ENCODE measurements at regions of chr19 and their contacts with region 1.

Region 1: GRCh38 chr19:55339048-55339888 is at the start of gene KMT5C:
- DNase-seq: peak; percentile 100
- H3K4me3 ChIP-seq: peak within 1 kb of the TSS; percentile 75 to 77
- H3K27ac ChIP-seq: peak within 1 kb of the TSS; percentile 89
- H3K4me1 ChIP-seq: peaks cover 0 to 23% (median 21%) of the 10 kb centered on the region in 4 donors
- H3K27me3 ChIP-seq: peaks cover 0 to 14% of the 10 kb centered on the region in 2 donors
- CTCF ChIP-seq: peak; percentile 49 to 59

Region 2: GRCh38 chr19:55146078-55146704 is 193.1 kb before region 1 on chr19:
- intact Hi-C with region 1: no loop called
- DNase-seq: no peak
- H3K4me3 ChIP-seq: no peak overlapping the region
- H3K27ac ChIP-seq: no peak overlapping the region
- H3K4me1 ChIP-seq: peaks cover 0 to 18% (median 4%) of the 10 kb centered on the region in 4 donors
- H3K27me3 ChIP-seq: peaks cover 7 to 95% of the 10 kb centered on the region in 2 donors
- CTCF ChIP-seq: no peak

Region 3: DNA sequence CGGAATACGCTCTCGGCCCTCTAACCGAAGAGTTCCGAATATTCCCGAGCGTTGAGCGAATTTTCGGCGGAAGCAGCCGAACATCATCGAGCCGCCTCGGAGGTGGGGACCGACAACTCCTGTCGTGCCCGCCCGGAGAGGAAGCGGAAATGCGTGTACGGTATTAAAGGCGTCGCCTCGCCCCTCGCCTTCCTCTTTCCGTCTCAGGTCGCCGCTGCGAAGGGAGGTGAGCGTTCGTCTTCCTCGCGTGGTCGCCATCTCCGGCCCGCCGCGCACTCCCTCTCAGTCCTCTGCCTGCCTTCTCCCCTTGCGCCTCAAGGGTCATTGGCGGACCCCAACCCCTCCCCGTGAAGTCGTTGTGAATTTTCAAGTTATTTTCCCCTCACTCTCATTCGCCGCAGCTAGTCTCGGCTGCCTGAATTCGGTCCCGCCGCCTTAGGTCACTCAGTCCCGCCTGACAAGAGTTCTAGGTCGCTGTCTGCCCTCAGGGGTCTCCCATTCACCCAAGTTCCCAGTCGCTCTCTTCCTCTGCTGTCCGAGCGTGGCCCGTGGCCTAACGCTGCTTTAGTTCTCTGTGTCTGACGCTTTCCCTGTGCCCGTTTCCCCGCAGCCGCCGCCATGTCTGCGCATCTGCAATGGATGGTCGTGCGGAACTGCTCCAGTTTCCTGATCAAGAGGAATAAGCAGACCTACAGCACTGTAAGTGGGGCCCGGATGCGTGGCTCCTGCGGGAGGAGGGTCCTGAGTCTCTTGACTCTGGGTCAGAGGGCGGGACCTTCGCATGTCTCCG is 46.7 kb after region 1 on chr19 and contains the start of gene RPL28:
- intact Hi-C with region 1: loop called (anchors 2 kb)
- DNase-seq: peak; percentile 96 to 99
- H3K4me3 ChIP-seq: peak within 1 kb of the TSS; percentile 78 to 93
- H3K27ac ChIP-seq: peak within 1 kb of the TSS; percentile 85 to 94
- H3K4me1 ChIP-seq: peaks cover 0 to 59% (median 47%) of the 10 kb centered on the region in 4 donors
- H3K27me3 ChIP-seq: no peaks in the 10 kb centered on the region
- CTCF ChIP-seq: no peak

Measured in tibial artery (tissue), 4 donors.